ENCODE measurements at regions of chr20 and their contacts with region 1.

Region 1: DNA sequence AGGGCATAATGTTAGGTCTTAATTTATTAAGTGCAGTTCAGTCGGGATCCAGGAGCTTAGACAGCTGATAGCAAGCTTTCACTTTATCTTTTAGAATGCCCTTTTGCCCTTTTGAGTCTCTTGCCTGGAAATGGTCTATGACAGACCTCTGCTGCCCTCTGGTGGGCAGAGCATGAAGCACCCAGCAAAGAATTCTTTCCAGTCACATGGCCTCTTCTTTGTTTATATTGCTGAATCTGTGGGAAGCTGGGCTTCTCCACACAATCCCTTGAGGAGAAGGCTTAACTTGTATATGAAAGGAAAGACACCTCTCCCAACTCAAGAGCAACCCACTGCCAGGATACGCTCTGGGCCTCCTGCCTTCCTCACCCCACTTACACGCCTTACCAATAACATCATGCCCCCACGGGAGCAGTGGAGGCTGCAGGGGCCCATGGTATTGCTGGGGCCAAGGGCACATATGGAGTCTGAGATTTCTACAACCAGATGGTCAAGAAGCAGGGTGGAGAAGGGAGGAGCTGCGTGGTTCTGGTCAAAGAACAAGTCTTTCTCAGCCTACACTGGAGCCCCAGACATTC is 20.4 kb downstream of the WFDC3 start:
- DNase-seq: peak; percentile 72 to 79
- ATAC-seq: peak; percentile 62 to 90 (median 80)
- H3K4me3 ChIP-seq: no peak overlapping the region
- H3K27ac ChIP-seq: peak overlapping the region in 4 of 10 donors; percentile 26 to 47 (median 34)
- H3K4me1 ChIP-seq: peaks cover 0 to 13% (median 11%) of the 10 kb centered on the region in 9 donors
- H3K27me3 ChIP-seq: no peaks in the 10 kb centered on the region
- CTCF ChIP-seq: peak; percentile 91 to 98 (median 95)

Region 2: DNA sequence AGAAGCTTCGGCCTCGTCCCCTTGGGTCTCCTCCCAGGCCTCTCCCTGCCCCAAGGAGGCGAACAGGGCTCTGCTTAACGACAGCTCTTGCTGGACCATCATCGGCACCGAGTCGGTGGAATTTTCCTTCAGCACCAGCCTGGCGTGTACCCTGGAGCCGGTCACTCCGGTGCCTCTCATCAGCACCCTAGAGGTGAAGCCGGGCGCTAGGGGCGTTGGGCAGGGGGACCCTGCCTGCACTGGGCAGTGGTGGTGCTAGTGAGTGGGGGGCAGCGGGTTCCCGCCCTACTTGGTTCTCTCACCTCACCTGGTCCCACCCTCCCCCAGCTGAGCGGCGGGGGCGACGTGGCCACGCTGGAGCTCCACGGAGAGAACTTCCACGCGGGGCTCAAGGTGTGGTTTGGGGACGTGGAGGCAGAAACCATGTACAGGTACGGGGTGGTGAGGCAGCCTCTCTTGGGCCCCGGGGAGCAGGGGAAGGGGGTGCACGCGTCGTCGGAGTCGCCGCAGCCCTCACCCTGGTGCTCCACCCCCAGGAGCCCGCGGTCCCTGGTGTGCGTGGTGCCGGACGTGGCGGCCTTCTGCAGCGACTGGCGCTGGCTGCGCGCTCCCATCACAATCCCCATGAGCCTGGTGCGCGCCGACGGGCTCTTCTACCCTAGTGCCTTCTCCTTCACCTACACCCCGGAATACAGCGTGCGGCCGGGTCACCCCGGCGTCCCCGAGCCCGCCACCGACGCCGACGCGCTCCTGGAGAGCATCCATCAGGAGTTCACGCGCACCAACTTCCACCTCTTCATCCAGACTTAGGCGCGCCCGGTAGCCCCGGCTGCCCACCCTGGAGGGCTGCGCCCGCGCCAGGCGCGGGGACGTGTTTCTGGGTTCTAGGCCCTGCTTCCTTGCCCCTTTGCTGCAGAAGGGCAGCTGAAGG is 454.9 kb before region 1 on chr20:
- intact Hi-C with region 1: loop called in 9 of 10 experiments (anchors 1 to 5 kb)
- DNase-seq: no peak
- ATAC-seq: no peak
- H3K4me3 ChIP-seq: no peak overlapping the region
- H3K27ac ChIP-seq: no peak overlapping the region
- H3K4me1 ChIP-seq: peaks cover 0 to 17% (median 4%) of the 10 kb centered on the region in 9 donors
- H3K27me3 ChIP-seq: peaks cover 0 to 62% (median 54%) of the 10 kb centered on the region in 7 donors
- CTCF ChIP-seq: no peak

Region 3: GRCh38 chr20:45329510-45330319 is 441.6 kb before region 1 on chr20:
- intact Hi-C with region 1: no loop called
- DNase-seq: no peak
- ATAC-seq: no peak
- H3K4me3 ChIP-seq: no peak overlapping the region
- H3K27ac ChIP-seq: no peak overlapping the region
- H3K4me1 ChIP-seq: peaks cover 0 to 8% (median 0%) of the 10 kb centered on the region in 9 donors
- H3K27me3 ChIP-seq: no peaks in the 10 kb centered on the region
- CTCF ChIP-seq: no peak

Region 4: GRCh38 chr20:45436732-45437391 is 334.4 kb before region 1 on chr20:
- intact Hi-C with region 1: loop called in 4 of 10 experiments (anchors 10 kb)
- DNase-seq: peak; percentile 89 to 90
- ATAC-seq: peak; percentile 93 to 97 (median 96)
- H3K4me3 ChIP-seq: peak overlapping the region; percentile 36 to 79 (median 59)
- H3K27ac ChIP-seq: peak overlapping the region in 9 of 10 donors; percentile 55 to 86 (median 76)
- H3K4me1 ChIP-seq: peaks cover 0 to 16% (median 11%) of the 10 kb centered on the region in 9 donors
- H3K27me3 ChIP-seq: no peaks in the 10 kb centered on the region
- CTCF ChIP-seq: peak in 8 of 9 donors; percentile 94 to 98 (median 97)

Region 5: GRCh38 chr20:45456632-45457031 is 314.6 kb before region 1 on chr20:
- intact Hi-C with region 1: loop called in 4 of 10 experiments (anchors 5 to 10 kb)
- DNase-seq: no peak
- ATAC-seq: no peak
- H3K4me3 ChIP-seq: no peak overlapping the region
- H3K27ac ChIP-seq: no peak overlapping the region
- H3K4me1 ChIP-seq: no peaks in the 10 kb centered on the region
- H3K27me3 ChIP-seq: peaks cover 0 to 7% (median 0%) of the 10 kb centered on the region in 7 donors
- CTCF ChIP-seq: peak in 5 of 9 donors; percentile 15 to 37 (median 26)

Region 6: DNA sequence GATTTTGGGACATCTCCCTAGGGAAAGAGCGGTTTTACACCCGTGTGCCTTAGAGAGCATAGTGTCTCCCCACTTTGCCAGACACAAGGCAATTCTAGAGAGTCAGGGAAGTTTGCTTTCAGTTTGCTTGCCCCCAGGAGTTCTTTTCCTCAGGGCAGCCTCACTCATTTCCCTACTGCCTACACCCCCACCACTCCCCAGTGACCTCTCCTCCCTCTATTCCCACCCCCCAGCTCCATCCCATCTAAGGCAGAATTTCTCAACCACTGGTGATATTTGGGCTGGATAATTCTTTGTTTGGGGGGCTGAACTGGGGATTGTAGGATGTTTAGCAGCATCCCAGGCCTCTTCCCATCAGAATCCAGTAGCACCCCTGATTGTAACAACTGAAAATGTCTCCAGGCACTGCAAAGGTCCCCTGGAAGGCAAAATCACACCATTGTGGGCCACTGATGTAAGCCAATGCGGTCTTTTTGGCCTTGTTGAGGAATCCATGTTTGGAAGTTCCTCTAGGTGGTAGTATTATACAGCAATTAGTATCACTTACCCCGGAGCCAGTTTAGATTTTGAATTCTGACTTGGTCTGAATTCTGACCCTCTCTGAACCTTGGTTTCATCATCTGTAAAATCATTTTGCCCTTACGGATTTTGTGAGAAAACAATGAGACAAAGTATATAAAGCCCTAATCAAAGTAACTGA is 225.4 kb before region 1 on chr20:
- intact Hi-C with region 1: loop called in 3 of 10 experiments (anchors 5 to 10 kb)
- DNase-seq: no peak
- ATAC-seq: no peak
- H3K4me3 ChIP-seq: no peak overlapping the region
- H3K27ac ChIP-seq: no peak overlapping the region
- H3K4me1 ChIP-seq: no peaks in the 10 kb centered on the region
- H3K27me3 ChIP-seq: peaks cover 0 to 47% (median 23%) of the 10 kb centered on the region in 7 donors
- CTCF ChIP-seq: peak in 6 of 9 donors; percentile 24 to 48 (median 32)